GM13976 (cell line): ENCODE measurements at regions of chr11 and their contacts with region 1.

Region 1: DNA sequence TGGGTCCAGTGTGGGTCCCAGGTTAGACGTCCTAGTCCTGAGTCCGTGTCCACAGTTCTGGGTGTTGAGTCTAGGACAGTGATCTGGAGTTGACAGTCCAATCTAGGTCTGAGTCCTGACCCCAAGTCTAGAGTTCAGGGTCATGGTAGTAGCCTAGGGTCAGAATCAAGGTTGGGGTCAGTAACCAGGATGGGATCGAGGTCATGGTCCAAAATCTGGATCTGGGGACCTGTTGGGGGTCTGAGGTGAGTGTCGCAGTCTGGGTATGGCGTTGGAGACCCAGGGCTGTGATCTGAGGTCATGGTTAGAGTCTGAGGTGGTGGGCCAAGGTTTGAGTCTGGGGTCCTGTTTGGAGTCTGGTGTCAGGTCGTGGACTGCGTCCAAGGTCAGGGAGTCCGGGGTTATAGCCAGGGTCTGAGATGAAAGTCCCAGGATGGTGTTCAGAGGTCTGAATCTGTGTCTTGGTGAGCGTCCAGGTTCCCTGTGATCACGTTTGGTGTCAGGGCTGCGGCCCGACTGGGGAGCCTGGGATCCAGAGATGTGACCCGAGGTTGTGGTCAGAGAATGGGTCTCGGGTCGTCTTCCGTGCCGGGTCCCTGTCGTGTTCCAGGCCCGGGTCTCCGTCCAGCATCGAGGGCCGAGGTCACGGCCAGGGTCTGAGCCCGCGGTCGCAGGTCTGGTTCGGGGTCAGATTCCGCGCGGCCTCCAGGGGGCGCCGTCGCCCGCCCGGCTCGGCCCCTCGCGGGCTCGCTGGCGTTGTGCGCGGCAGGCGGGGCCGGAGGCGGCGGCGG is 445 bp upstream of the GRK2 start:
- DNase-seq: peak; percentile 90
- CTCF ChIP-seq: peak; percentile 87

Region 2: GRCh38 chr11:67312187-67313103 is 46.6 kb after region 1 on chr11:
- in situ Hi-C with region 1: loop called (anchors 5 kb)
- DNase-seq: no peak
- CTCF ChIP-seq: no peak

Region 3: DNA sequence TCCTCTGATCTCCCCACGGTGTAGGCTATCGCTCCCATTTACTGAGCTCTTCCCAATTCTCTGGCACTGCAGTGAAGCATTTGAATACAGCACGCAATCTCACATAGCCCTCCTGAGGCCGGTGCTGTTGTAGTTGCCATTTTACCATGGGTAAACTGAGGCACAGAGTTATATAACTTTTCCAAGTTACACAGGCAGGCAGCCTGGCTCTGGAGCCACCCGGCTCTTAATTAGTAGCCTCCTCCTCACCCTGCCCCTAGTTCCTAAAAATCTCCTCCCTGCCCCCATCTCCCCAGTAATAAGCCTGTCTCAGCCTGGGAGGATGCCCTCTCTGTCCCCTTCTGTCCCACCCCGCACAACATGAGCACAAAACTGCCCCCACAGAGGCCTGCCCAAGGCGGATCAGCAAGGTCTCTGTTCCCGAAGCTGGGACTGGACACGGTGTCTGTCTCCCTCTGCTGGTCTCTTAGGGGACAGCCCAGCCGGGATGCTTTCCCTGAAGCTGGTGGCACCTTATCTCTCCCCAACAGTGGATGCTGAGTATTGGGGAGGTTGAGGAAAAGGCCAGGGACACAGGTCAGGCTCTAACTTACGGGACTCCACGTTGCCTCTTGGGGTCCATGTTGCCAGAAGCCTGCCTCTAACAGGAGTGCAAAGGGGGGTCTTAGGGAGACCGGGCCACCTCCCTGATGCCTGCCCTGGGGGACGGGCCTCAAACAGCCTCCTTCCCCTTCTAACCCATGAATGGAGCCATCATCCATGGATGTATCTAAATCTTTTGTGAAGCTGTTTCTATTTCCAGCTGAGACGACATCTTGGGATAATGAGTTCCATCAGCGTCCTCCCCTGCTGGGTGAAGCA is 116.7 kb after region 1 on chr11:
- in situ Hi-C with region 1: loop called (anchors 10 kb)
- DNase-seq: peak; percentile 86
- CTCF ChIP-seq: peak; percentile 88